BJ (cell line): ENCODE measurements at regions of chr2 and their contacts with region 1.

Region 1: DNA sequence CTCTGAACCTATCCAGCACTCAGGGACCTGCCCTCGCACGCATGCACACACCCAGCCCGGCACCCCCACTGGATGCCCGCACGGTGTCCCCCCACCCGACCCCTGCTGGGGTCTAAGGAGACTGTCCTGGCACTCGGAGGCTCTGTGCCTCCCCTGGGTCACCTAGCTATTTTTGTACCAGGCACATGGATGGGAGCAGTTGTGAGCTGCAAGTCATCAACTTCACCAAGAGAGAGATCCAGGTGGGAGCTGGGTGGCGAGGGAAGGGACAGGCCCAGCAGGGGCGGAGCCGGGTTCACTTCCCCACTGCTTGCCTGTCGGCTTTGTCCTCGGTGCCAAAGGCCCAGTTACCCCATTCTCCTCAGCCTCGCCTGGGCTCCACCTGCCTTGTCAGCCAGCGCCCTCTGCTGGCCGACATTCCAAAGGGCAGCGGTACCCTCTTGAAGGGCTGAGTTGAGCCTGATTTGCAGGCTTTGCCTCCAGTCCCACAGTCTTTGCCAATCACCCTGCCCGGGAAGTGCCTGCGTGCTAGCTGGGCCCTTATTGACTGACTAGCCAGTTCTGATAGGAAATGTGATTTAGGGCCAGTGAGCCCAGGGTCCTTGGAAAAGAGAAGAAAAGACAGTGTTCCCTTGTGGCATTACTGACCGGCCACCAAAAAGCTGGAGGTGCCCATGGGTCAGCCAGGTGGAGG is 5.8 kb downstream of the NT5DC4 start:
- DNase-seq: no peak
- H3K4me3 ChIP-seq: no peak overlapping the region
- H3K27me3 ChIP-seq: no peaks in the 10 kb centered on the region
- CTCF ChIP-seq: peak; percentile 98

Region 2: DNA sequence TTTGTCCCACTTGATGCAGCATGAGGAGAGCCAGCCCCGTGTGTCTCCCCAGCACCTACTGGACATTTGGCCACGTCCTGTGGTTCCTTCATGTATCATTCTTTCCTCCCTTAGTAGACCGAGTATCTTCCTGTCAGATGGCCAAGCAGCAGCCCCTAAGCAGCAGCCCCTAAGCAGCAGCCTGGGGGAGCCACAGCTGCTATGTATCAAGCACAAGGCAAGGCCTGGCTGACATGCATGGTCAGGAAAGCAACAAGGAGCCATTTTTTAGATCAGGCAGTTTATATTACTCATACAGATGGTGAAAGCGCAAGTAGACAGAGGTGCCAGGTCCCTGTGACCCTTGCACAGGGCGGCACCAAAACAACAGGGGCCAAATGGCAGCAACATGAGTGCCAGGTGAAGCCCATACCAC is 120.1 kb before region 1 on chr2:
- CTCF ChIA-PET with region 1: interaction called, 238 read pairs
- POLR2A ChIA-PET with region 1: no interaction called
- DNase-seq: no peak
- H3K4me3 ChIP-seq: no peak overlapping the region
- H3K27me3 ChIP-seq: no peaks in the 10 kb centered on the region
- CTCF ChIP-seq: no peak

Region 3: DNA sequence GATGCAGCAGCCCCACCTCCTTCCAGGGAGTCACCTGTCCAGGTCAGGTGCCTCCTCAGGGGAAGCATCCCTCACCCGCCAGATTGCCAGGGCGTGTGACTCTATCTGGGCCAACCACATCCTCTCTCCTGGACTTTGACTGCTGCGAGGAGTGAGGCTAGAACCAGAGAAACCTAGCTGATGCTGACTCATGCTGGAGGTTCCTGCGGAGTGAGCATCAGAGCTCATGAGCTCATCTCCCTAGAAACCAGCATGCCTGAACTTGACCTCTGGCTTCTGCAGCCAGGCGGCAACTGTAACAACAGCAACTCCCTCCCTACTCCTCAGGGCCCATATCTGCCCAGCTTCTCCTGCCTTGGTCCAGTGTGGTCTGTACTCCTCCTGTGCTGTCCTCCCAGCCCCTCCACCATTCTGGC is 34.1 kb before region 1 on chr2:
- CTCF ChIA-PET with region 1: interaction called, 22 read pairs
- POLR2A ChIA-PET with region 1: no interaction called
- DNase-seq: peak; percentile 81
- H3K4me3 ChIP-seq: no peak overlapping the region
- H3K27me3 ChIP-seq: no peaks in the 10 kb centered on the region
- CTCF ChIP-seq: no peak

Region 4: DNA sequence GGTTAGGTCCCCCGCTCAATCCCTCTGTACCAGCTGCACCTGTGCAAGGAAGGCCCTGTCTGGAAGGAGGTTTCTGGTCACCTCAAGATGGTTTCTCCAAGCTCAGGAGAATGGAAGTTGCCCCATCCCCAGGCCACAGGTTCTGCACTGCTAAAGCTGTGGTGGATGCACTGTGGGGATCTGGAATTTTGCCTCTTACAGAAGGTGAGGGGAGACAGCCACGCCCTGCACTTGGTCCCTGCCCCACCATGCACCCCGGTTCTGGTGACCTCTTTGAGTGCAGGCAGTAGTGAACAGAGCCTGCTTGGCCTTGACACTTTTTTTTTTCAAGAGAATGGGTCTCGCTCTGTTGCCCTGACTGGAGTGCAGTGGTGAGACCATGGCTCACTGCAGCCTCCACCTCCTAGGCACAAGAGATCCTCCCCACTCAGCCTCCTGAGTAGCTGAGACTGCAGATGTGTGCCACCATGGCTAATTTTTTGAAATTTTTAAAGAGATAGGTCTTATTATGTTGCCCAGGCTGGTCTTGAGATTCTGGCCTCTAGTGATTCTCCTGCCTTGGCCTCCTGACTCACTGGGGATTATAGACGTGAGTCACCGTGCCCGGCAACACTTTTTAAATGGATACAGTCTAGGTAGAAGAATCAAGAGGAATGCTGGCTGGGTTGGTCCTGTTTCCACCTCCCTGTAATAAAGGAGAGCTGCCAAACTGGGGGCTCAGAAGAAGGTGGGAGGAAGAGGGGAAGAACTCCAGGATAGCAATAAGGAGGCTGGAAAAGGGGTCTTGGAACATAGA is 11.6 kb before region 1 on chr2:
- CTCF ChIA-PET with region 1: interaction called, 15 read pairs
- POLR2A ChIA-PET with region 1: no interaction called
- DNase-seq: no peak
- H3K4me3 ChIP-seq: no peak overlapping the region
- H3K27me3 ChIP-seq: no peaks in the 10 kb centered on the region
- CTCF ChIP-seq: no peak

Region 5: DNA sequence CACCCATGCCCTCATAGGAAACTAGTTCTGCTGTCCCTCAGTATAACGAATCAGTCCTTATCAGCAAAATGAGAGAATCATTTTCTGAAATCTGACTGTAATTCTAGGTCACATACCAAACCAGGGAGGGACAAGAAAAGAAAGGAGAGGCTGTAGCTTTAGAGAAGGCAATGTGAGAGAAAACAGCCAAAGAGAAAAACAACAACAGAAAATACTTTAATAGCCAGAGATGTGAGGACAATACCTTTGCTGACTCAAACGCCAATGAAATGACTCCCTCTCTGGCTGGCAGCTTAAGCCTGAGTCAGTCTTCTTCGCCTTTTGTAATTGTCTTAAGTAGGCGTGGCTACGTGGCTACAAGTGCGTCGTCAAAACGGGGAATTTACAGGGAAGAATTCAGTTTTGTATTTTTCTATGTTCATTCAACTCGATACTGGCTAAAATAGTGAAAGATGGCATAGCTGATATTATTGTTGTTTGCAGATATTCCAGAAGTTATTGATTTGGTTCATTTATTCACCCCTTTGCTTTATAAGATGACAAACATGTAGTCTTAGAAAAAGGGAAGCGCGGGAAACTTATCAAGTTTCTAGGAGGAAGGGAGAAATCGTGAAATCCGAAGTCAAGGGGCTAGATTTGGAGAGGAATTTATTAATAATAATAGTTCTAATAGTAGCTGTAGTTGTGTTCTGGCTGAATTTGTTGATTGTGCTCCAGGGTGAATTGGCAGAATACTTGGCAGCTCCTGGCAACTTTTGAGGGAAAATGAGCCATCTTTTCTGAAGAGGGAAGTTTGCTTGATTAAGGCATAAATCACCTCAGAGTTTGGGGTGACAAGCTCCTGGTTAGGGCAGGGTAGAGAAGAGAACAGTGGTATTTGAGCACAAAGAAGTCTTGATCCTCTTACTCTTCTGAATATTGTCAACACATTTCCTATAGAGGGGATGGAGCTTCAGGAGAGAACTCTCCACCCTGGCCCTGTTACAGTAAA is 57.9 kb after region 1 on chr2 and contains the start of gene IL1A:
- CTCF ChIA-PET with region 1: no interaction called
- POLR2A ChIA-PET with region 1: no interaction called
- DNase-seq: no peak
- H3K4me3 ChIP-seq: no peak within 1 kb of the TSS
- H3K27me3 ChIP-seq: no peaks in the 10 kb centered on the region
- CTCF ChIP-seq: no peak
- polyA plus RNA-seq, gene IL1A: 0.11 and 0.17 TPM in 2 replicates